Activated T-helper 2 cell treated with anti-CD3 and anti-CD28 coated beads, Interferon-gamma antibody, Interleukin-2, Interleukin-4, amounts not matched to agents 10 μg/mL and 5 μg/mL and 100 μg/mL, durations not matched to agents 14 hours and 24 hours and 36 hours (primary cell): ENCODE measurements at regions of chr1 and their contacts with region 1.

Region 1: DNA sequence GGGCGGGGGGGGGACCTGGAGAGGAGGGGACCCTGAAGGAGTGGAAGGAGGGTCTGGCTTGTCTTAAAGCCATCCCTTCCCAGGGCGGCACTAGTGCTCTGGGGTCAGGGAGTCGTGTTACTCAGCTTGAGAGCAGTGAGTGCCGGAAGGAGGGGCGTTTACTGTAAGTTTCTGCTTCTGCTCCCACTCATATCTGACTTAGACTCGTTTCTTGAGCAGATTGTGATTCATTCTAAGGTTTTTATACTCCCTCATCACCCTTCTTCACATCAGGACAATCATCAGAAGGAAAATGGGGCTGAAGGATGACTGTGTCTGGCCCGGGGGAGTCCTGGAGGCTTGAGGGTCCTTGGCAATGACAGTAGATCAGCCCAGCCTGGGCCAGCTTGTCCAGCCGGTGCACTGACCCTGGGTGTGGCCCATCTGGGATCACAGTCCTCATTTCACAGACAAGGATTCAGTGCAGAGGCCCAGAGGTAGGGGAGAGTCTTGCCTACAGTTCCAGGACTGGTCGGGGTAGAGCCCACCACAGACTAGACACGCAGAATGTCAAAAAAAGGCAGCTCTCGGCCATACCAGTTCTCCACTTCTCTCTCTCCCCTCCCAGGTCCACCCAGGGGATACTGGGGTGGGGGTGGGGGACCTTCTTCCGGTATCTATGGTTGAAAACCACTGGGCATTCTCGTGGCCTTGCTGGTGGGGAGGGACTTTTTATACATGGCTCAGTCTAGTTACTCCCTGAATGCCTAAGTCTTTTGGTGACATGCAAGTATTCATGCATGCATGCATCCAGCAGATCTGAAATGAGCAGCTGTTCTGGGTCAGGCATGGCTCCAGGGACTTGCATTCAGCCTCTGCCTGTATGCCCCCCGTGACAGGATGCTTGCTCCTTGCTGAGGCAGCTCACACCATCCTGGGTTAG is 5.1 kb downstream of the TNFRSF8 start:
- DNase-seq: peak; percentile 44
- H3K4me3 Mint-ChIP-seq: peak overlapping the region; percentile 73
- H3K27ac Mint-ChIP-seq: peak overlapping the region; percentile 94
- H3K4me1 Mint-ChIP-seq: peaks cover 49% of the 10 kb centered on the region
- H3K27me3 Mint-ChIP-seq: no peaks in the 10 kb centered on the region

Region 2: DNA sequence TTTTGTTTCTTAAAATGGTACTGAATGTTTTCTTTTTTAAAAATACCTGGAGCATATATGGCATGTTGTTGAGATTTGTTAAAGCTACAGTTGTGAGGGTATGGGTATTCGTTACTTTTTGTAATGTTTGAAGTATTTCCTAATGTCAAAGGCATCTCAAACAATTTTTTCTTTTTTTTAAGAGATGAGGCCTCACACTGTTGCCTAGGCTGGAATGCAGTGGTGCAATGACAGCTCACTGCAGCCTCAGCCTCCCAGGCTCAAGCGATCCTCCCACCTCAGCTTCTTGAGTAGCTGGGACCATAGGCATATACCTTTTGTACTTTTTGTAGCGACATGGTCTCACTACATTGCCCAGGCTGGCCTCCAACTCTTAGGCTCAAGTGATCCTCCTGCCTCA is 246.1 kb before region 1 on chr1:
- intact Hi-C with region 1: no loop called
- DNase-seq: no peak
- H3K4me3 Mint-ChIP-seq: no peak overlapping the region
- H3K27ac Mint-ChIP-seq: no peak overlapping the region
- H3K4me1 Mint-ChIP-seq: no peaks in the 10 kb centered on the region
- H3K27me3 Mint-ChIP-seq: no peaks in the 10 kb centered on the region

Region 3: GRCh38 chr1:11907275-11908094 is 160.7 kb before region 1 on chr1:
- intact Hi-C with region 1: loop called (anchors 5 kb)
- DNase-seq: peak; percentile 92
- H3K4me3 Mint-ChIP-seq: peak overlapping the region; percentile 87
- H3K27ac Mint-ChIP-seq: peak overlapping the region; percentile 98
- H3K4me1 Mint-ChIP-seq: peaks cover 23% of the 10 kb centered on the region
- H3K27me3 Mint-ChIP-seq: peaks cover 7% of the 10 kb centered on the region

Region 4: GRCh38 chr1:12040457-12041051 is 27.6 kb before region 1 on chr1:
- intact Hi-C with region 1: loop called (anchors 1 kb)
- DNase-seq: no peak
- H3K4me3 Mint-ChIP-seq: no peak overlapping the region
- H3K27ac Mint-ChIP-seq: peak overlapping the region; percentile 49
- H3K4me1 Mint-ChIP-seq: peaks cover 49% of the 10 kb centered on the region
- H3K27me3 Mint-ChIP-seq: no peaks in the 10 kb centered on the region

Region 5: GRCh38 chr1:12087797-12088314 is 19.7 kb after region 1 on chr1:
- intact Hi-C with region 1: loop called (anchors 1 kb)
- DNase-seq: peak; percentile 62
- H3K4me3 Mint-ChIP-seq: peak overlapping the region; percentile 70
- H3K27ac Mint-ChIP-seq: peak overlapping the region; percentile 97
- H3K4me1 Mint-ChIP-seq: peaks cover 58% of the 10 kb centered on the region
- H3K27me3 Mint-ChIP-seq: no peaks in the 10 kb centered on the region

Region 6: GRCh38 chr1:12518931-12519692 is 451.0 kb after region 1 on chr1:
- intact Hi-C with region 1: loop called (anchors 10 kb)
- DNase-seq: no peak
- H3K4me3 Mint-ChIP-seq: peak overlapping the region; percentile 22
- H3K27ac Mint-ChIP-seq: peak overlapping the region; percentile 72
- H3K4me1 Mint-ChIP-seq: peaks cover 32% of the 10 kb centered on the region
- H3K27me3 Mint-ChIP-seq: no peaks in the 10 kb centered on the region